Activated T-helper 2 cell treated with anti-CD3 and anti-CD28 coated beads, Interferon-gamma antibody, Interleukin-2, Interleukin-4, amounts not matched to agents 10 μg/mL and 5 μg/mL and 100 μg/mL, durations not matched to agents 14 hours and 24 hours and 36 hours (primary cell): ENCODE measurements at regions of chr7 and their contacts with region 1.

Region 1: GRCh38 chr7:97179454-97180104 is 62.1 kb downstream of the SDHAF3 start:
- DNase-seq: peak; percentile 10
- H3K4me3 Mint-ChIP-seq: no peak overlapping the region
- H3K27ac Mint-ChIP-seq: no peak overlapping the region
- H3K4me1 Mint-ChIP-seq: no peaks in the 10 kb centered on the region
- H3K27me3 Mint-ChIP-seq: no peaks in the 10 kb centered on the region

Region 2: DNA sequence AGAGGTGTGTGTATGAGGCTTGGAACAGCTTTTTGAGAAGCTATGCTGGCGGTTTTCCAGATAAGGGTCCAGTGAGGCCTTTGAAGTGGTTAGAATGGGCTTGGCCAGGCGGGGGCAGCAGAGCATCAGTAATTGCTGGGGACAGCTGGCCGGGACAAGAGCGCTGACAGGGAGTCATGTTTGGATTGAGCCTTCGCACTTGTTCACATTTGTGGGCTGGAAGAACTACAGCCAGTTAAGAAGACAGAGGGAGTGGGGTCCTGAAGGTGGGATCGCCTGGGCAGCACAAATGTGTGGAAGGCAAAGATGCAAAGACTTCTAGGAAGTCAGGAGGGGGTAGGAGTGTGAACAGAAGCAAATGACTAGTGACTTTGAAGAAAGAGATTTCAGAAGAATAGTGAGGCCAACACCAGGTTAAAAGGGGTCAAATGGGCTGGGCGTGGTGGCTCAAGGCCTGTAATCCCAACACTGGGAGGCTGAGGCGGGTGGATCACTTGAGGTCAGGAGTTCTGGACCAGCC is 74.8 kb before region 1 on chr7:
- intact Hi-C with region 1: loop called (anchors 1 kb)
- DNase-seq: peak; percentile 49
- H3K4me3 Mint-ChIP-seq: no peak overlapping the region
- H3K27ac Mint-ChIP-seq: no peak overlapping the region
- H3K4me1 Mint-ChIP-seq: no peaks in the 10 kb centered on the region
- H3K27me3 Mint-ChIP-seq: peaks cover 20% of the 10 kb centered on the region

Region 3: GRCh38 chr7:97117372-97118188 is 62.0 kb before region 1 on chr7 and contains the start of gene SDHAF3:
- intact Hi-C with region 1: loop called (anchors 5 kb)
- DNase-seq: peak; percentile 97
- H3K4me3 Mint-ChIP-seq: peak within 1 kb of the TSS; percentile 95
- H3K27ac Mint-ChIP-seq: peak within 1 kb of the TSS; percentile 90
- H3K4me1 Mint-ChIP-seq: peaks cover 37% of the 10 kb centered on the region
- H3K27me3 Mint-ChIP-seq: no peaks in the 10 kb centered on the region
- total RNA-seq, gene SDHAF3: 23.7 and 26.9 TPM in 2 replicates

Region 4: GRCh38 chr7:97145068-97145467 is 34.5 kb before region 1 on chr7:
- intact Hi-C with region 1: loop called (anchors 2 kb)
- DNase-seq: no peak
- H3K4me3 Mint-ChIP-seq: no peak overlapping the region
- H3K27ac Mint-ChIP-seq: no peak overlapping the region
- H3K4me1 Mint-ChIP-seq: peaks cover 3% of the 10 kb centered on the region
- H3K27me3 Mint-ChIP-seq: no peaks in the 10 kb centered on the region

Region 5: DNA sequence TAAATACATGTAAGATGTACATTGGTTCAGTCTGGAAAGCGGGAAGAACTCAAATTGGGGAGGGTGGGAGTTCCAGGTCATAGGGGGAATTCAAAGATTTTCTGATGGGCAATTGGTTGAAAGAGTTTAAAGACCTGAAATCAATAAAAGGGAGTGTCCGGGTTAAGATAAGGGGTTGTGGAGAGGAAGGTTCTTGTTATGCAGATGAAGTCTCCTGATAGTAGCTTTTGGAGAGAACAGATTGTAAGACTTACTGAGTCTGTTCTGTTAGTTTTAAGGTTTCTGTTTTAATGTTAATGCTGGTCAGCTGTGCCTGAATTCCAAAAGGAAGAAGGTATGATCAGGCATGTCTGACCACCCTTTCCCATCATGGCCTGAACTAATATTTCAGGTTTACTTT is 13.3 kb before region 1 on chr7:
- intact Hi-C with region 1: no loop called
- DNase-seq: no peak
- H3K4me3 Mint-ChIP-seq: no peak overlapping the region
- H3K27ac Mint-ChIP-seq: no peak overlapping the region
- H3K4me1 Mint-ChIP-seq: peaks cover 8% of the 10 kb centered on the region
- H3K27me3 Mint-ChIP-seq: no peaks in the 10 kb centered on the region

Region 6: GRCh38 chr7:97390915-97391593 is 211.5 kb after region 1 on chr7:
- intact Hi-C with region 1: no loop called
- DNase-seq: no peak
- H3K4me3 Mint-ChIP-seq: no peak overlapping the region
- H3K27ac Mint-ChIP-seq: no peak overlapping the region
- H3K4me1 Mint-ChIP-seq: no peaks in the 10 kb centered on the region
- H3K27me3 Mint-ChIP-seq: no peaks in the 10 kb centered on the region